Caco-2 (cell line): ENCODE measurements at regions of chr1 and their contacts with region 1.

Region 1: GRCh38 chr1:210400043-210400840 is 71.5 kb downstream of the HHAT start:
- DNase-seq: peak; percentile 71 to 79
- H3K4me3 ChIP-seq: no peak overlapping the region
- H3K4me3 Mint-ChIP-seq: no peak overlapping the region
- H3K27ac Mint-ChIP-seq: peak overlapping the region; percentile 62
- H3K4me1 ChIP-seq: no peaks in the 10 kb centered on the region
- H3K4me1 Mint-ChIP-seq: peaks cover 14% of the 10 kb centered on the region
- H3K27me3 ChIP-seq: no peaks in the 10 kb centered on the region
- H3K27me3 Mint-ChIP-seq: no peaks in the 10 kb centered on the region
- CTCF ChIP-seq: peak; percentile 83 to 92

Region 2: GRCh38 chr1:210360852-210361477 is 39.3 kb before region 1 on chr1:
- CTCF ChIA-PET with region 1: interaction called, 14 read pairs
- POLR2A ChIA-PET with region 1: no interaction called
- intact Hi-C with region 1: loop called (anchors 1 kb)
- DNase-seq: peak in 1 of 2 experiments; percentile 41
- H3K4me3 ChIP-seq: no peak overlapping the region
- H3K4me3 Mint-ChIP-seq: no peak overlapping the region
- H3K27ac Mint-ChIP-seq: no peak overlapping the region
- H3K4me1 ChIP-seq: peaks cover 1% of the 10 kb centered on the region; the same call in 1 of the 2 replicates
- H3K4me1 Mint-ChIP-seq: peaks cover 6% of the 10 kb centered on the region
- H3K27me3 ChIP-seq: no peaks in the 10 kb centered on the region
- H3K27me3 Mint-ChIP-seq: no peaks in the 10 kb centered on the region
- CTCF ChIP-seq: peak; percentile 54 to 74